Psoas muscle (tissue), 8 donors: ENCODE measurements at regions of chr18 and their contacts with region 1.

Region 1: DNA sequence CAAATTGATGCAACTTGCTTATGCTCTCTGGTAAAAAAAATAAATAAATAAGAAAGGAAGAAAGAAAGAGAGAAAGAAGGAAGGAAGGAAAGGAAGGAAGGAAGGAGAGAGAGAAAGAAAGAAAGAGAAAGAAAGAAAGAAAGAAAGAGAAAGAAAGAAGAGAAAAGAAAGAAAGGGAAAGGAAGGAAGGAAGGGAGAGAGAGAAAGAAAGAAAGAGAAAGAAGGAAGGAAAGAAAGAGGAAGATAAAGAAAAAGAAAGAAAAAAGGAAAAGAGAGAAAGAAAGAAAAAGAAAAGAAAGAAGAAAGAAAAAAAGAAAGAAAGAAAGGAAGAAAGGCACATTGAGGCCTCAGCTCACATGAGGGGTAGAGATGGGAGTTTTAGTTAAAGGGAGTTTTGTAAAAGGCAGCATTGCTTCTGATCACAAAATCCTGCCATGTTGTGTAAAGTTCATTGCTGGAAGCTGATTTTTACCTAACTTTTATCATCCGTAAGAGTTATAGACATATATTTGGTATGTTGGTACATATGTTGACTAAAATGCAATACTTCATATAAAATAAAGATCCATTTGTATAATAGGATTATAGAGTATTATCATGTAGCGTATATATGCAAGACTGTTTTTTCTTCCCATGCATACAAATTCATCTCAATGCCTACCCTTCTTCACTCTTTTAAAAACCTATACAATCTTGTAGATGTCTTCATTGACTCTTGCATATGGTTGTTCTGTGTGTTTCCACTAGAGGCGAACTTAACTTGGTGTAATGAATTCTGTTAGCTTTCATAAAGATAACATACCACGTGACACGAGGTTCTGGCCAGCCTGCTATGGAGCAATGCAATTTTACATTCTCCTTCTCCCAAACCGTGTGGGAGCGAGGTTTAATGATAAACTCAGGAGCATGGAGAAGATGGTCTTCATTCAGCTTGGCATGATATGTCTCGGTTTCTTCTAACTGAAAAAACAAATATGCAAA is 32.8 kb downstream of the MYOM1 start:
- DNase-seq: no peak
- ATAC-seq: peak in 2 of 4 donors; percentile 35 to 42
- H3K4me3 ChIP-seq: no peak overlapping the region
- H3K27ac ChIP-seq: no peak overlapping the region
- H3K4me1 ChIP-seq: peaks cover 24% of the 10 kb centered on the region
- H3K27me3 ChIP-seq: no peaks in the 10 kb centered on the region
- CTCF ChIP-seq: peak; percentile 9

Region 2: DNA sequence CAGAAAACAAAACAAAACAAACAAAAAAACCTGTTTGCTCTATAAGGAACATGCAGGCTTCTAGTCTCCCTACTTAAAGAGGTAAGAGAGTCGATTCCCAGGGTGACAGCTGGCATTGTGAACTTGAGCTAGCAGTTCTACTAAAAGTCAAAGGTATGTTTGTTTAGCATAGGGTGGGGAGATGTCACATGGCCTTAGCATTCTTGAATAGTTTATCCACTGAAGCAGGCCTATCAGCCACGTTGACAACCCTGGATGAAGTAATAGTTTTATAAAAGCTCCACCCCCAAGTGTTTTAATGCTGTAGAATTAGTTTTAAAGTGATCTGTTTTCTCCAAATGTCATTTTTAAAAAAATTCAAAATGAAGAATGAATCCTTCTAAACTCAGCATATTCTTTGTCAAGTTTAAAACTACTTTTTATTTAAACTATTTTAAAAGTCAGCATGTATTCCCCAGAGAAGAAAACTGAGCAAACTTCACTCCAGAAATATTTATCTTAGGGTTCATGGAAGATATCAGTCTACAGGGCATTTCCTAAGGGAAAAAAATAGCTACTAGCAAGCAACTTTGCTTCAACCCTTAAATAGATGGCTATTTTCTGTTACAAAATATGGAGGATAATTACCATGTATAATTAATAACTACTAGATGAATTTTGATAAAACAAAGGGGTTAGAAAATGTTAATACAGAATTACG is 31.1 kb after region 1 on chr18:
- intact Hi-C with region 1: loop called (anchors 5 kb)
- DNase-seq: no peak
- ATAC-seq: peak; percentile 66 to 70 (median 70)
- H3K4me3 ChIP-seq: peak overlapping the region; percentile 79
- H3K27ac ChIP-seq: peak overlapping the region; percentile 95
- H3K4me1 ChIP-seq: peaks cover 39% of the 10 kb centered on the region
- H3K27me3 ChIP-seq: no peaks in the 10 kb centered on the region
- CTCF ChIP-seq: no peak